ENCODE measurements at regions of chr10 and their contacts with region 1.

Region 1: DNA sequence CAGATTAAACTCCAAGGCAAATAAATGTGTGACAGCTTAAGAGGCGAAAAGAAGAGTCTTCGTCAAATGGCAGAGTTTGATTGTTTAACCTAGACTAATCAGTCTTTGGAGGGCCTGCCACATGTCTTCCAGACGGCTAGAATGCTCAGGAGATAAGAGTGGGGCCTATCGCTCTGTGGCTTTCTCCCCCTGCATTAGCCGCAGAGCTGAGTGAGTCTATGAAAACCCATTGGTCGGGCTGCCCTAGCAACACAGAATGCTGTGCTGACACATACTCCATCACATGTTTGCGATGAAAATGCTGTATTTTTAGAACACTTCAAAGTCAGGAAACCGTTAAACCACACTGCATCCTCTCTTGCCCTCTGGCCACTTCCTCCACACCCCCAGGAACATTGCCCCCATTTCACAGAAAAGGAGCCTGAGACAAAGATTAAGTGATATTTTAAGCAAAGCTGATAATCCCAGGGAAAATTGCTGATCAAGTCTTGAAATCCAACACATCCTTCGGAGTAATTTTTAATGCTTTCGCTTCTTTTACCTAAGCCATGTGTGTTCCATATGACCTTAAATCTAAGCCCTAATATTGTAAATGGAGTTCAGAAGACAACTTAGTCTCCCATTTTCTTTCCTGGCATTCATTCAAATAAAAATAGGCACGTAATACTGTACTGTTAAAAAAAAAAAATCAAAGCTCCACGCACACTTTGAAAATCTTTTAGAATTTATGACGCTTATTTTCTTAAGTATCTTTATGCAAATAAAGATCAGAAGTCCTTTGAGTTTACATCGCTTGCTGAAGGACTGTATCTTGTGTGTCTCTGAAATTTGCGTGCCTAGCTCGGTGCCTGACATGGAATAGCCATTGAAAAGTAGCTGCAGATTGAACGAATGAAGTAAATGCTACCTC is 161.2 kb downstream of the CELF2 start:
- DNase-seq: peak; percentile 87 to 98 (median 89)
- H3K4me3 ChIP-seq: peak overlapping the region; percentile 13 to 20
- H3K4me3 Mint-ChIP-seq: peak overlapping the region in 2 of 8 donors; percentile 76 to 80
- H3K27ac ChIP-seq: peak overlapping the region; percentile 96
- H3K27ac Mint-ChIP-seq: peak overlapping the region in 3 of 7 donors; percentile 97 to 100 (median 98)
- H3K4me1 ChIP-seq: peaks cover 100% of the 10 kb centered on the region
- H3K4me1 Mint-ChIP-seq: peaks cover 30 to 90% (median 60%) of the 10 kb centered on the region in 4 donors
- H3K27me3 ChIP-seq: no peaks in the 10 kb centered on the region
- H3K27me3 Mint-ChIP-seq: no peaks in the 10 kb centered on the region

Region 2: DNA sequence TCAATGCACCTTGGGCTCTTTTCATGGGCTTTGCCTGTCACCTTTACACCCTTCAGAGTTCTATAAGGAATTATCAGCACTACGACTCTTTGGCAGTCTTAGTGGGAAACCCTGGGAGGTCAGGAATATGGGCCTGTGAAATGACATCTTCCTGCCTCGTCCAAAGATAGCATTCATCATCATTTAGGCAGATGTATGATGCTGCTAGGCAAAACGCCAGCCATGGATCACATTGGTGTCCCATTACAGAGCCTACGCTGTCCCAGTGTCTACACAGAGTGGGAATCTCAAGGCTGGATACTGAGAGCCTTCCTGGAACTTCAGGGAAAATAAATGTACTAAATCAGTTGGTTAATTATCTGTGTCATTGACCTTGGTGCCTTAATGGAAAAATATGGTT is 420.6 kb before region 1 on chr10:
- CTCF ChIA-PET with region 1: no interaction called
- POLR2A ChIA-PET with region 1: no interaction called
- intact Hi-C with region 1: no loop called
- DNase-seq: no peak
- H3K4me3 ChIP-seq: no peak overlapping the region
- H3K4me3 Mint-ChIP-seq: no peak overlapping the region
- H3K27ac ChIP-seq: no peak overlapping the region
- H3K27ac Mint-ChIP-seq: no peak overlapping the region
- H3K4me1 ChIP-seq: no peaks in the 10 kb centered on the region
- H3K4me1 Mint-ChIP-seq: no peaks in the 10 kb centered on the region
- H3K27me3 ChIP-seq: no peaks in the 10 kb centered on the region
- H3K27me3 Mint-ChIP-seq: peaks cover 3 to 7% of the 10 kb centered on the region in 2 donors

Region 3: DNA sequence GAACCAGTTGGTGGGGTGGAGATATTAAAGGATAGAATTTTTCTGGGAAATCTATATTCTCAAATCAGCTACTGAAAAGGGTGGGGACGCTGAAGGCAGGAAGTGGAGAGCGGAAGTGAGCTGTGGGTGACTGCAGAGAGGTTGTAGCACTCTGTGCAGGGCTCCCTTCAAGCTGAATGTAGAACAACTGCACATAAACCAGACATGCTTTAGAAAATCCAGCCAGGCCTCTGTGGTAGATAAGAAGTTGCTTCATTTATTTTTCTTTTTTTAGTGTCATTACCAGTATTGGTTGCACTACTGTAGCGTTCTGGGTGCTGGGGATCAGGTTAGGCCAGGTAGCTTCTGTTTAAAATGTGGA is 33.4 kb before region 1 on chr10:
- CTCF ChIA-PET with region 1: interaction called, 308 read pairs
- POLR2A ChIA-PET with region 1: interaction called, 1,422 read pairs
- intact Hi-C with region 1: loop called (anchors 1 kb)
- DNase-seq: peak; percentile 74 to 88 (median 79)
- H3K4me3 ChIP-seq: peak overlapping the region in 1 of 2 donors; percentile 41
- H3K4me3 Mint-ChIP-seq: peak overlapping the region; percentile 68 to 88 (median 78)
- H3K27ac ChIP-seq: peak overlapping the region; percentile 93
- H3K27ac Mint-ChIP-seq: peak overlapping the region; percentile 91 to 100 (median 99)
- H3K4me1 ChIP-seq: peaks cover 98% of the 10 kb centered on the region
- H3K4me1 Mint-ChIP-seq: peaks cover 81 to 98% (median 91%) of the 10 kb centered on the region in 4 donors
- H3K27me3 ChIP-seq: no peaks in the 10 kb centered on the region
- H3K27me3 Mint-ChIP-seq: no peaks in the 10 kb centered on the region

Region 4: DNA sequence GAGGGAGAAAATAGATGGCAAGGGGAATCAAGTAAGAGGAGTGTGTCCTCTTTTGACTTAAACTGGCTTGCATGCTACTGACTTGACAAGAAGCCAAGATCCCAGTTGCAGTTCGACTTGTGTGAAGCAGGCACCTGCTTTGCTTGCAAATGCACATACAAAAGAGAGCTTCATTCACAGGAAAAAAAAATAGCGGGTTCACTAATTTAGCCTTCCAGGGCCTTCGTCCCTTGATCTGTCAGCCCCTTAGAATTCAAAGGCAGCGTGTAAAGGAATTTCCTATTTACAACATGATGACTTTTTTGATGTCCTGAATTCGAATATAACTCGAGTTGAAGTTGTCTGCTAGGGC is 30.9 kb after region 1 on chr10:
- CTCF ChIA-PET with region 1: no interaction called
- POLR2A ChIA-PET with region 1: interaction called, 23 read pairs
- intact Hi-C with region 1: loop called (anchors 2 kb)
- DNase-seq: no peak
- H3K4me3 ChIP-seq: peak overlapping the region in 1 of 2 donors; percentile 32
- H3K4me3 Mint-ChIP-seq: peak overlapping the region; percentile 68 to 94 (median 78)
- H3K27ac ChIP-seq: peak overlapping the region; percentile 52
- H3K27ac Mint-ChIP-seq: peak overlapping the region; percentile 56 to 96 (median 87)
- H3K4me1 ChIP-seq: peaks cover 100% of the 10 kb centered on the region
- H3K4me1 Mint-ChIP-seq: peaks cover 83 to 99% (median 92%) of the 10 kb centered on the region in 4 donors
- H3K27me3 ChIP-seq: no peaks in the 10 kb centered on the region
- H3K27me3 Mint-ChIP-seq: no peaks in the 10 kb centered on the region

Region 5: DNA sequence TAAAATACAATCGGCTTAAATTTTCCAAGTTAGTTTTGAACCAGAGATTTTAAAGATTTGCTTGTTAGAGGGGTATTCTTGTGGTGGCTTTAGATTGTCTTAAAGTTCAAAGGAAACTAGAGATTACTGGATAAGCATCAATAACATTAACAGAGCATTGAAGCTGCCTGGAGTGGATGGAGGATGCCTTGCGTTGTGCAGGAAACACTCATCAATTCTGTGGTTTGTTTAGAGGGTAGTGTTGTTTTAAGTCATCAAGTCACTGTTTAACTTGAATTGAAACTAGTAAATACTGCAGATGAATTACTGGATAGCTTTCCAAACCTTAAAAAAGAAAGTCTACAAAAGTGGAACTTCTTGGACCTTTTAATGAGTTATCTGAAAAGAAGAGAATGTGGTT is 57.4 kb after region 1 on chr10:
- CTCF ChIA-PET with region 1: interaction called, 11 read pairs
- POLR2A ChIA-PET with region 1: interaction called, 119 read pairs
- intact Hi-C with region 1: no loop called
- DNase-seq: peak; percentile 58 to 78 (median 63)
- H3K4me3 ChIP-seq: no peak overlapping the region
- H3K4me3 Mint-ChIP-seq: peak overlapping the region; percentile 25 to 74 (median 65)
- H3K27ac ChIP-seq: peak overlapping the region; percentile 57
- H3K27ac Mint-ChIP-seq: peak overlapping the region; percentile 76 to 92 (median 90)
- H3K4me1 ChIP-seq: peaks cover 97% of the 10 kb centered on the region
- H3K4me1 Mint-ChIP-seq: peaks cover 68 to 81% (median 72%) of the 10 kb centered on the region in 4 donors
- H3K27me3 ChIP-seq: no peaks in the 10 kb centered on the region
- H3K27me3 Mint-ChIP-seq: no peaks in the 10 kb centered on the region

Region 6: GRCh38 chr10:11301571-11302111 is 122.8 kb after region 1 on chr10:
- CTCF ChIA-PET with region 1: no interaction called
- POLR2A ChIA-PET with region 1: no interaction called
- intact Hi-C with region 1: no loop called
- DNase-seq: no peak
- H3K4me3 ChIP-seq: no peak overlapping the region
- H3K4me3 Mint-ChIP-seq: no peak overlapping the region
- H3K27ac ChIP-seq: no peak overlapping the region
- H3K27ac Mint-ChIP-seq: peak overlapping the region in 1 of 7 donors; percentile 87
- H3K4me1 ChIP-seq: no peaks in the 10 kb centered on the region
- H3K4me1 Mint-ChIP-seq: peaks cover 4 to 31% (median 19%) of the 10 kb centered on the region in 4 donors
- H3K27me3 ChIP-seq: no peaks in the 10 kb centered on the region
- H3K27me3 Mint-ChIP-seq: no peaks in the 10 kb centered on the region

Region 7: DNA sequence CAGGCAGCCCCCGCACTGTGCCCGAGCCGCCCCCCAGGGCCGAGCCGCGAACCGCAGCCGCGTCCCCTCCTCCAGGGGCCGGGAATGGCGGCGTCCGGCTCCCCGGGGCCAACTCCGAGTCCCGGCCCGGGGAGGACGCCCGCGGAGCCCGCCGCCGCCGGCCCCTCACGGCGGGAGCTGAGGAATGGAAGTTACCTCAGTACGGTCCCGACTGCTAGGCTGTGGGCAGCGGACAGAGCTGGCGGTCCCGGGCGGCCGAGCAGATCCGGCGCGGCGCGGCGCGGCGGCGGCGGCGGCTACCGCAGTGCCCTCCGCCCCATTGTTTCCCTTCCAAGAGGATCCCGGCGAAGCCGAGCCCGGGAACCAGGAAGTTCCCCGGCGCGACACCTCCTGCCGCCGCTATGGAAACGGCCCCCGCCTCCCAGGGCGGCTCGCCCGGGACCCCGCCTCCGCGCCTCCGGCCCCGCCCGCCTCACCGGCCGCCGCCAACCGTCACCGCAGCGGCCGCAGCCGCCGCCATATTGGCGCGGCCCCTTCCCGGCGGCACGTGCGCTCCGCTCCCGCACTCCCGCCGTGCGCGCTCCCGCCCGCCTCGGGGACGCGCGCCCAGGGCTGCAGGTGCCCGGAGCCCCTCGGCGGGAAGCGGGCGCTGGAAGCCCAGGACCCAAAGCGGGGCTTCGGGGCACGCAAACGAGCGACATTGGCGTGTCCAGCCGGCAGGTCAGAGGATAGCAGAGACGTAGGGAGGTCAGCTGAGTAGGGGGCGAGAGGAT is 432.6 kb after region 1 on chr10 and contains the start of gene USP6NL:
- CTCF ChIA-PET with region 1: no interaction called
- POLR2A ChIA-PET with region 1: no interaction called
- intact Hi-C with region 1: loop called (anchors 10 kb)
- DNase-seq: peak; percentile 48 to 66 (median 59)
- H3K4me3 ChIP-seq: peak within 1 kb of the TSS; percentile 46 to 71
- H3K4me3 Mint-ChIP-seq: peak within 1 kb of the TSS; percentile 89 to 95 (median 94)
- H3K27ac ChIP-seq: peak within 1 kb of the TSS; percentile 25
- H3K27ac Mint-ChIP-seq: peak within 1 kb of the TSS; percentile 80 to 94 (median 91)
- H3K4me1 ChIP-seq: peaks cover 27% of the 10 kb centered on the region
- H3K4me1 Mint-ChIP-seq: peaks cover 24 to 42% (median 39%) of the 10 kb centered on the region in 4 donors
- H3K27me3 ChIP-seq: no peaks in the 10 kb centered on the region
- H3K27me3 Mint-ChIP-seq: peaks cover 1 to 2% of the 10 kb centered on the region in 2 donors
- total RNA-seq, gene USP6NL: 3.9 to 4.8 TPM

Measured in CD4-positive, alpha-beta memory T cell (primary cell).